Activated CD4-positive, alpha-beta memory T cell treated with anti-CD3 and anti-CD28 coated beads, Interleukin-2, amount 10 ng/mL, durations not matched to agents 7 days and 5 days (primary cell): ENCODE measurements at regions of chr3 and their contacts with region 1.

Region 1: DNA sequence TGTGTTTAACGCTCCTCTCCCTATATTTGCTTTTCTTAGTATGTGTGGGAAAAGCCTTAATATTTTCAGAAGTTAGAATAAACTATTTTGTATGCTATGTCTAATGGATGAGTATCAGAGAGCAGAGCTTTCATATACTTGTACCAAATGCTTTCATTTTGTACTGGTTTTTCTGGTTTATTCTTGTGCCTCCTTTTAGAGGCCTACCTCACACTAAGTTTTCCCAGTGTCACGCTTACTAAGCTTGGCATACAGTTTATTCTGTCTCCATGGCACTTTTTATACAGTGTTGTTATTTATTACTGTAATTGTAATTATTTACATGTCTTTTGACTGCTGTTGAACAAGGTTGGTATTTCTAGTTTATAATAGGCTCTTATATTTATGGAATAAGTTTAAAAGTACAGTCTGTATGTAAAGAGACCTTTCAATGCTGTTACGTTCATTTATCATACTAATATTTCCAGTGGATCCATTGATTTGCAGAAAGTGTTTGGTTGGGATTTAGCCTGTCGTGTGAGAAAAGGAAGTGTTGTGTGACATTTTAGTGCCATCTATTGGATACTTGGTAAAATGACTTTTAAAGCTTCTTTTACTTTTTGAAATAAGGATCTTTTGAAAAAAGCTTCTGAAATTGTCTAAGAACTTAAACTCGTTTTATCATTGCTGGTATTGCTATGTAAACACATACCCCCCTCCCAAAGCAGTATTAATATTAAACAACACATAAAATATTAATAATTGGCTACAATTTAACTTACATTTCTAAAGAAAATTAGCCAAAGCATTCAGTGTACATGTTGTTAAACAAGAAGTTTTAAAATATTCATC is 5.2 kb upstream of the EBLN2 start:
- DNase-seq: no peak
- H3K4me3 Mint-ChIP-seq: no peak overlapping the region
- H3K27ac Mint-ChIP-seq: no peak overlapping the region
- H3K4me1 Mint-ChIP-seq: peaks cover 19% of the 10 kb centered on the region
- H3K27me3 Mint-ChIP-seq: no peaks in the 10 kb centered on the region

Region 2: DNA sequence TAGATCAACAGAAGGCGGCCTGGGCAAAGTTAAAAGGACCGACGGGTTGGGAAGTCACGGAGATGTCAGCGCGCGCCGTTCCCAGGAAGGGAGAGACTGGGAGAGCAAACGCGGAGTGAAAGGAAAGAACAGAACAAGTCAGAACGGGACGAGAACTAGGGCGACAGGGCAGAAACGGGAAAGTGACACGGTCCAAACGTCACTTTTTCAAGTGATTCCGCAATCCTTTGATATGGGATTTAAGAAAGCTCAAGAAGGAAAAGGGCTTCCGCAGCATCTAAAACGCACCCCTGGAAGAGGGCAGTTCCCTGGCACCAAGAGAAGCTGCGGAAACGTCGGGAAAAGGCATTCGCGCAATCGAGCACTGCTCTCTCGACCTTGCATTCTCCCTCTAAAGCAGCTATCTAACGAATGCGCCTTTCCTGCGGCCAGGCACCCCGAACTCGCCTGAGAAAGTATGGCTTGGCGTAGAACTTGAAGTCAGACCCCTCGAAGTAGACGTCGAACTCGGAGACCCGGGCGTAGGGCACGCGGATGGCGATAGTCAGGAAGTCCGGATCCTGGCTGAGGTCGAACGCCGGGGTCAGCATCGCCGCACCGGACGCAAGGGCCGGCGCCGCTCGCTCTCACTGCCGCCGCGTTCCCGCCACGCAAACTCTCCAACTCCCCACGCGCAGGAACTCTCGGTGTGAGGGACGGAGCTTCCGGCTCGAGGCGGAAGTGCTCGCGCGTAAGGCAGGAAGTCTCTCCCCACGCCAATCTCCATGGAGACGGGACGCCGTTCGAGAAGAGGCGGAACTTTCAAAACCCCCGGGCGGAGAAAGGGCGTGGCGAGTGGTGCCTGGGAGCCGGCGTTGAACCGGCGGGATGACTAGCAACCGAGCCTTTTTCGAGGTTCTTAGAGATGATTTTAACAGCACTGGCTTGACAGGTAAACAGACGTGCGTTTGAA is 208.2 kb before region 1 on chr3 and contains the start of gene SHQ1:
- CTCF ChIA-PET with region 1: interaction called, 22 read pairs
- POLR2A ChIA-PET with region 1: no interaction called
- DNase-seq: peak; percentile 95
- H3K4me3 Mint-ChIP-seq: peak within 1 kb of the TSS; percentile 93
- H3K27ac Mint-ChIP-seq: peak within 1 kb of the TSS; percentile 47
- H3K4me1 Mint-ChIP-seq: peaks cover 51% of the 10 kb centered on the region
- H3K27me3 Mint-ChIP-seq: peaks cover 17% of the 10 kb centered on the region
- total RNA-seq, gene SHQ1: 16.7 to 20.6 TPM

Region 3: DNA sequence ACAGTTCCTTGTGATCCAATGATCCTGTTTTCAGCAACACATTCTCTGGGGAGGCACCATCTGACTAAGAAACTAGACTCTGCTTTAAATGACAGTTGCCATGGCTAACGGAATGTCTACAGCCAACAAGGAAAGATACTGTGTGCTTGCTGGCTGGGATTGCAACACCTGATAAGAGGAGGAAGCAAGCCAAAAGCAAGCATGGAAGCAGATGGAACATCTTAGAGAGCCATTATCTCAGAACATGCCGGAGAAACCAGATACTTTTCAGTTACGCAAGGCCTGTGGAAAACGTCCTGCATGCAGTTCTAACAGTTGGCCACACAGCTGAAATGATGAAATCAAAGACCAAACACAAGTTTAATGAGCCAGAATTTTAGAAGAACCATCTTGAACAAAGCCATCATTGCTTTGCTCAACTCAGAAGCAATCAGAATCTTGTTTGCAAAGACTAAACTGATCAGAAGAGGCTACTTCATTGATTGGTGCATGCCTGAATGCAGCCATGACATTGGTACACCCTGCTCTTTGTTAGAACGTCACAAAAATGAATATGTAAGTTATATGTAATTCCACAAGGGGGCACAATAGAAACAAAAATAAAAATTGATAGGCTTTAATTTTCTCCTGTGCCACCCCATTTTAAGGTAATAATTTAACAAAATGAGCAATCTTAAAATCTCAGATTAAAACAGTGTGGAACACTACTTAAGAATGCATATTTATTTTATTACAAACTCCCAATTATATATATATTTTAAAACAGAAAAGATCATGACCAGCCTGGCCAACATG is 117.6 kb before region 1 on chr3:
- CTCF ChIA-PET with region 1: interaction called, 45 read pairs
- POLR2A ChIA-PET with region 1: interaction called, 6 read pairs
- DNase-seq: peak; percentile 21
- H3K4me3 Mint-ChIP-seq: no peak overlapping the region
- H3K27ac Mint-ChIP-seq: no peak overlapping the region
- H3K4me1 Mint-ChIP-seq: no peaks in the 10 kb centered on the region
- H3K27me3 Mint-ChIP-seq: peaks cover 20% of the 10 kb centered on the region

Region 4: DNA sequence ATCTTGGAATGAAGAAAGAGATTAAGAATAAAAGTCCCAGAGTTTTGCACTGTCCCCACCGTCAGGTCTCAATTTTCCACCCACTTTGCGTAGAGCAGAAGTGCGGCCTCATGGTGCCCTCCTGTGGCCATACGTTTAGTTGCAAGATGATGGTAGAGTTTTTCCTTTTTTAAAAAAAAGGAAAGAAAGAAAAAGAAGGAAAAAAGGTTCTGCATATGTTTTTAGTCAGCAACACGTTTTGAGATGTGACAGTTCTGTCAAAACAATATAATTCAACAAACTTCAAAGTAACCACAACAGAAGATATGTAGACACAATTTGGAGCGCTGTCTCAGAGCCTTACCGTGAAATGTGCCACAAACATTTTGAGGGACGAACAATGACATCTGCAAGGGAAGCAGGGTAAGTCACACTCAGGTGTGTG is 29.9 kb after region 1 on chr3:
- CTCF ChIA-PET with region 1: interaction called, 14 read pairs
- POLR2A ChIA-PET with region 1: no interaction called
- DNase-seq: peak; percentile 44
- H3K4me3 Mint-ChIP-seq: no peak overlapping the region
- H3K27ac Mint-ChIP-seq: no peak overlapping the region
- H3K4me1 Mint-ChIP-seq: peaks cover 7% of the 10 kb centered on the region
- H3K27me3 Mint-ChIP-seq: peaks cover 5% of the 10 kb centered on the region